ENCODE measurements at regions of chr19 and their contacts with region 1.

Region 1: GRCh38 chr19:18291590-18292461 is 10.4 kb upstream of the JUND start:
- DNase-seq: peak; percentile 98
- ATAC-seq: peak; percentile 57
- H3K4me3 Mint-ChIP-seq: peak overlapping the region; percentile 85
- H3K27ac Mint-ChIP-seq: peak overlapping the region; percentile 93
- H3K4me1 Mint-ChIP-seq: peaks cover 64% of the 10 kb centered on the region
- H3K27me3 Mint-ChIP-seq: no peaks in the 10 kb centered on the region
- CTCF ChIP-seq: no peak

Region 2: DNA sequence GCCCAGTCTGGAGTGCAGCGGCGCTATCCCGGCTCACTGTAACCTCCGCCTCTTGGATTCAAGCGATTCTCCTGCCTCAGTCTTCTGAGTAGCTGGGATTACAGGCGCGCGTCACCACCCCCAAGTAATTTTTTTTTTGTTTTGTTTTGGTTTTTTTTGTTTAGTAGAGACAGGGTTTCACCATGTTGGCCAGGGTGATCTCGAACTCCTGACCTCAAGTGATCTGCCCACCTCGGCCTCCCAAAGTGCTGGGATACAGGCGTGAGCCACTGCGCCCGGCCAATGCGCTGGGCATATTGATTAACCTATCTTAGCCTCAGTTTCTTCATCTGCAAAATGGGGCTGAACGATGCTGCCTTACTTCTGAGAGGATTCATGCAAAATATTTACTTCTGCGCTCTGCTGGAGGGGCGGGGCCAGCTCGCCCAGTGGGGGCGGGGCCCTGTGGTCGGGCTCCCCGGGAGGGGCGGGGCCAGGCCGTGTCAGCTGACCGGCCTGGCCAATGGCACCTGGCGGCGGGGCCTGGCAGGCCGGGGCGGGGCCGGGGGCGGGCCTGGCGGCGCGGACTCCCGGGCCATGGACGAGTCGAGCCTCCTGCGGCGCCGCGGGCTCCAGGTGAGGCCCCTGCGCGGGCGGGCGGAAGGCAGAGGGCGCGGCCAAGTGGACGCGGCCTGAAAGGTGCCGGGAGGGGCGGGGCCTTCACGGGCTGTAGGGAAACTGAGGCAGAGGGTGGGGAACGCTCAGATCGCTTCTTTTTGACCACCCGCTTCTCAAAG is 194.4 kb before region 1 on chr19 and contains the start of gene MAST3:
- CTCF ChIA-PET with region 1: no interaction called
- POLR2A ChIA-PET with region 1: no interaction called
- intact Hi-C with region 1: no loop called
- DNase-seq: peak; percentile 94
- ATAC-seq: peak; percentile 96
- H3K4me3 Mint-ChIP-seq: peak within 1 kb of the TSS; percentile 86
- H3K27ac Mint-ChIP-seq: peak within 1 kb of the TSS; percentile 56
- H3K4me1 Mint-ChIP-seq: peaks cover 25% of the 10 kb centered on the region
- H3K27me3 Mint-ChIP-seq: no peaks in the 10 kb centered on the region
- CTCF ChIP-seq: no peak
- total RNA-seq, gene MAST3: 23.1 to 23.3 TPM

Region 3: GRCh38 chr19:18274781-18275356 is 17.0 kb before region 1 on chr19:
- CTCF ChIA-PET with region 1: interaction called, 119 read pairs
- POLR2A ChIA-PET with region 1: interaction called, 225 read pairs
- intact Hi-C with region 1: no loop called
- DNase-seq: peak; percentile 32
- ATAC-seq: peak; percentile 6
- H3K4me3 Mint-ChIP-seq: no peak overlapping the region
- H3K27ac Mint-ChIP-seq: peak overlapping the region; percentile 63
- H3K4me1 Mint-ChIP-seq: peaks cover 31% of the 10 kb centered on the region
- H3K27me3 Mint-ChIP-seq: no peaks in the 10 kb centered on the region
- CTCF ChIP-seq: no peak

Region 4: GRCh38 chr19:18304458-18305310 is 12.9 kb after region 1 on chr19:
- CTCF ChIA-PET with region 1: interaction called, 19 read pairs
- POLR2A ChIA-PET with region 1: interaction called, 74 read pairs
- intact Hi-C with region 1: loop called (anchors 2 kb)
- DNase-seq: peak; percentile 96
- ATAC-seq: peak; percentile 77
- H3K4me3 Mint-ChIP-seq: peak overlapping the region; percentile 92
- H3K27ac Mint-ChIP-seq: peak overlapping the region; percentile 96
- H3K4me1 Mint-ChIP-seq: peaks cover 40% of the 10 kb centered on the region
- H3K27me3 Mint-ChIP-seq: no peaks in the 10 kb centered on the region
- CTCF ChIP-seq: no peak

Region 5: DNA sequence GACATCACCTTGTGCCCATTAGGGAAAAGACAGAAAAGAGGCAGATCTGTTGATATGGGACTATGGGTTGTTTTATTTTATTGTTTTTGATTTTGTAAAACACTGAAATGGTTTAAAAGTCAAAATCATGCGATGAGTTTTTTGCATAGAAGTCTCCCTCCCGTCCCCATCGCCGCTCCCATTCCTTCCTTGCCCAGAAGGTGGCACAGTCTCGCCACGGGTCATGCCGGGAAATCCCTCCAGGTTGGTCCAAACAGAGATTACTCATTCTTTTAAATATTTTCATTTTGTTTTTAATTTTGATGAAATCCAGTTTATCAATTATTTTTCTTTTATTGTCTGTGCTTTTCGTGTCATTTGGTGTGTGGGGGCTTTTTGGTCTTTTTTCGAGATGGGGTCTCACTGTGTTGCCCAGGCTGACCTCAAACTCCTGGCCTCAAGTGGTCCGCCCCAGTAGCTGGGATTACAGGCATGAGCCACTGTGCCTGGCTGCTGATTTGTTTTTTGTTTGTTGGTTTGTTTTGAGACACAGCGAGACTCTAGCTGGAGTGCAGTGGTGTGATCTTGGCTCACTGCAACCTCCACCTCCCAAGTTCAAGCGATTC is 57.8 kb after region 1 on chr19:
- CTCF ChIA-PET with region 1: no interaction called
- POLR2A ChIA-PET with region 1: no interaction called
- intact Hi-C with region 1: no loop called
- DNase-seq: peak; percentile 64
- ATAC-seq: peak; percentile 58
- H3K4me3 Mint-ChIP-seq: no peak overlapping the region
- H3K27ac Mint-ChIP-seq: no peak overlapping the region
- H3K4me1 Mint-ChIP-seq: peaks cover 3% of the 10 kb centered on the region
- H3K27me3 Mint-ChIP-seq: no peaks in the 10 kb centered on the region
- CTCF ChIP-seq: peak; percentile 58

Region 6: DNA sequence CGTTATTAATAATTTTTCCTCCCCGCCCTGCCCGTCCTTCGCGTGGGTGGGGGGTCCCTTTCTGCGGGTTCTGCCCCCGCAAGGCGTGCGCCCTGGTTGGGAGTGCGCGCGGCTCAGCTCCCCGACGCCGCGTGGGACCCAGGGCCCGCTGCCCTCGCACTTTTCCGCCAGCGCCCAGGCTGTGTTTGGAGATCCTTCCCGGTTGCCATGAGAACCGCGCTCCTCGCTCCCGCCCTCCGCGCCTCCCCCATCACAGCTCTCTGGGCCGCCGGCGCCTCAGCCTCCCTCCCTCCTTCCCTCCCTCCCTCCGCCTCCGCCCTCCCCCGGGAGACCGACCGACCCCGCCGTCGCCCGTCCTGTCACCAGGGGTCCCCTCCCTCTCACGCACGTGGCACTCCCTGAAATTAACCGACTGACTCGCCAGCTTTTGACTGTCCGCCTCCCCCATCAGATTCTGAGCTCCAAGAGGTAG is 125.0 kb after region 1 on chr19:
- CTCF ChIA-PET with region 1: no interaction called
- POLR2A ChIA-PET with region 1: no interaction called
- intact Hi-C with region 1: no loop called
- DNase-seq: peak; percentile 82
- ATAC-seq: peak; percentile 21
- H3K4me3 Mint-ChIP-seq: peak overlapping the region; percentile 74
- H3K27ac Mint-ChIP-seq: peak overlapping the region; percentile 87
- H3K4me1 Mint-ChIP-seq: peaks cover 59% of the 10 kb centered on the region
- H3K27me3 Mint-ChIP-seq: peaks cover 14% of the 10 kb centered on the region
- CTCF ChIP-seq: no peak

Measured in activated CD8-positive, alpha-beta T cell treated with anti-CD3 and anti-CD28 coated beads for 36 hours (primary cell).